Activated CD4-positive, alpha-beta T cell treated with anti-CD3 and anti-CD28 coated beads, Interleukin-2, amount 10 ng/mL, durations not matched to agents 24 days and 14 days (primary cell): ENCODE measurements at regions of chr3 and their contacts with region 1.

Region 1: DNA sequence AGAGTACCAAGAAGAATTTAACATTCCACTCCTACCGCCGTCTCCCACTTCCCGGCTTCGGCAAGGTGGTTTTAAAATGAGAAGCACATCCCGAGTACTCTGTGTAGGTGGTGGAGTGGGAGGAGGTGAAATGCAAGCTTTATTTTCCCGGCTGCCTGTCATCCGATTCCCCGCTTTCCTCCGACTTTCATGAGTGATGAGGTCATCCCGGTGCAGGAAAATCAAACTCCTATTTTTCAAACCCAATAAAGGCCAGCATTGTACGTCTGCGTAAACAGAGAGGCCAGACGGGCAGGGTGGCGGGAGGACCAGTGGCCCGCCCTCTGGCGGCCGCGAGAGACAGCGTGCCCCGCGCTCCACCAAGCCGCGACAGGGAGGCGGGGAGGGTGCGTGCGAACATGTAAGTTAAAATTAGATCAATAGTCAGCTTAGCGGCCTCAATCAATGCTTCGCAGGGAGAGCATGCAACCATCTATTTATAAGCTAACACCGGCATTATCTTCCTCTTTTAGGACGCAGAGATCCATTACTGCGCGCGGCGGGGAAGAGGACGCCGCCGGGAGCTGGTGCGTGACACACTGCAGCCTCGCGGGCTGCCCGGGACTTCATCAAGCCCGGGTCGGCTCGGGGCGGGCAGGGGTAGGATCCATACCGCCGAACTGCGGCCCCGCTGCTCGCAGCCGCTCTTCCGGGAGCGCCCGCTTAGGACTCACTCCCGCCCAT is 163.3 kb downstream of the CD47 start:
- DNase-seq: peak; percentile 90
- H3K4me3 Mint-ChIP-seq: peak overlapping the region; percentile 87
- H3K27ac Mint-ChIP-seq: peak overlapping the region; percentile 59
- H3K4me1 Mint-ChIP-seq: peaks cover 13% of the 10 kb centered on the region
- H3K27me3 Mint-ChIP-seq: peaks cover 19% of the 10 kb centered on the region

Region 2: GRCh38 chr3:107987036-107987947 is 59.8 kb after region 1 on chr3:
- intact Hi-C with region 1: no loop called
- DNase-seq: no peak
- H3K4me3 Mint-ChIP-seq: no peak overlapping the region
- H3K27ac Mint-ChIP-seq: no peak overlapping the region
- H3K4me1 Mint-ChIP-seq: peaks cover 13% of the 10 kb centered on the region
- H3K27me3 Mint-ChIP-seq: no peaks in the 10 kb centered on the region

Region 3: GRCh38 chr3:108477511-108478147 is 550.1 kb after region 1 on chr3:
- intact Hi-C with region 1: loop called (anchors 5 kb)
- DNase-seq: peak; percentile 86
- H3K4me3 Mint-ChIP-seq: no peak overlapping the region
- H3K27ac Mint-ChIP-seq: no peak overlapping the region
- H3K4me1 Mint-ChIP-seq: peaks cover 3% of the 10 kb centered on the region
- H3K27me3 Mint-ChIP-seq: peaks cover 10% of the 10 kb centered on the region

Region 4: DNA sequence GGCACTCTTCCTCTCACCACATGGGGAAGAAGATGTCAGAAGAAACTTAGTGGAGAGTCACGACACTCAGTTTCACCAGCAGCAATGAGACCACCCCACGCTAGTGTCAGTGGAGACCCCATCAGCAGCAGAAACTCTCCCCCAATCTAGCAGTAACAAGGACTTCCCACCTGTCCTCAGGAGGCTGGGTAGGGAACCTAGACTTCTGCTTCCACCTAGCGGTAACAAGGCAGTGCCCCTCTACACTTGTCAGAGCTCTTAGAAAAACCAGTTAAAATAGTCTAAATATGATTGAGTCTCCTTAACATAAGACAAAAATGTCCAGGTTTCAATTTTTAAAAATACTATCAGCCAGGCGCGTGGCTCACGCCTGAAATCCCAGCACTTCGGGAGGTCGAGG is 952.4 kb after region 1 on chr3:
- intact Hi-C with region 1: no loop called
- DNase-seq: peak; percentile 56
- H3K4me3 Mint-ChIP-seq: no peak overlapping the region
- H3K27ac Mint-ChIP-seq: no peak overlapping the region
- H3K4me1 Mint-ChIP-seq: peaks cover 12% of the 10 kb centered on the region
- H3K27me3 Mint-ChIP-seq: no peaks in the 10 kb centered on the region